SK-N-SH (cell line): ENCODE measurements at regions of chr2 and their contacts with region 1.

Region 1: GRCh38 chr2:204024503-204024902 is 87.9 kb downstream of the ICOS start:
- DNase-seq: peak; percentile 20
- H3K4me3 ChIP-seq: no peak overlapping the region
- H3K27ac ChIP-seq: no peak overlapping the region
- H3K4me1 ChIP-seq: peaks cover 0 to 24% of the 10 kb centered on the region in 2 experiments; a peak in 3 of 4 replicates
- H3K27me3 ChIP-seq: no peaks in the 10 kb centered on the region; the same call in 1 of the 2 replicates
- CTCF ChIP-seq: peak; percentile 60
- EP300 ChIP-seq: no peak
- RAD21 ChIP-seq: peak; percentile 92

Region 2: GRCh38 chr2:203928849-203929248 is 95.7 kb before region 1 on chr2:
- CTCF ChIA-PET with region 1: interaction called, 12 read pairs
- POLR2A ChIA-PET with region 1: no interaction called
- DNase-seq: peak; percentile 20
- H3K4me3 ChIP-seq: no peak overlapping the region
- H3K27ac ChIP-seq: no peak overlapping the region
- H3K4me1 ChIP-seq: no peaks in the 10 kb centered on the region
- H3K27me3 ChIP-seq: no peaks in the 10 kb centered on the region
- CTCF ChIP-seq: peak; percentile 49
- EP300 ChIP-seq: no peak
- RAD21 ChIP-seq: peak; percentile 61

Region 3: GRCh38 chr2:204012072-204012653 is 12.3 kb before region 1 on chr2:
- CTCF ChIA-PET with region 1: interaction called, 10 read pairs
- POLR2A ChIA-PET with region 1: no interaction called
- DNase-seq: peak; percentile 53
- H3K4me3 ChIP-seq: no peak overlapping the region
- H3K27ac ChIP-seq: peak overlapping the region in 1 of 2 experiments; percentile 67; a peak in 2 of 4 replicates
- H3K4me1 ChIP-seq: peaks cover 0 to 19% of the 10 kb centered on the region in 2 experiments; a peak in 2 of 4 replicates
- H3K27me3 ChIP-seq: no peaks in the 10 kb centered on the region
- CTCF ChIP-seq: no peak
- EP300 ChIP-seq: peak in 1 of 2 experiments; percentile 89; a peak in 2 of 4 replicates
- RAD21 ChIP-seq: peak; percentile 7